Posterior vena cava (tissue), 2 donors: ENCODE measurements at regions of chr19 and their contacts with region 1.

Region 1: GRCh38 chr19:43777163-43777700 is 3.5 kb downstream of the KCNN4 start:
- DNase-seq: no peak

Region 2: DNA sequence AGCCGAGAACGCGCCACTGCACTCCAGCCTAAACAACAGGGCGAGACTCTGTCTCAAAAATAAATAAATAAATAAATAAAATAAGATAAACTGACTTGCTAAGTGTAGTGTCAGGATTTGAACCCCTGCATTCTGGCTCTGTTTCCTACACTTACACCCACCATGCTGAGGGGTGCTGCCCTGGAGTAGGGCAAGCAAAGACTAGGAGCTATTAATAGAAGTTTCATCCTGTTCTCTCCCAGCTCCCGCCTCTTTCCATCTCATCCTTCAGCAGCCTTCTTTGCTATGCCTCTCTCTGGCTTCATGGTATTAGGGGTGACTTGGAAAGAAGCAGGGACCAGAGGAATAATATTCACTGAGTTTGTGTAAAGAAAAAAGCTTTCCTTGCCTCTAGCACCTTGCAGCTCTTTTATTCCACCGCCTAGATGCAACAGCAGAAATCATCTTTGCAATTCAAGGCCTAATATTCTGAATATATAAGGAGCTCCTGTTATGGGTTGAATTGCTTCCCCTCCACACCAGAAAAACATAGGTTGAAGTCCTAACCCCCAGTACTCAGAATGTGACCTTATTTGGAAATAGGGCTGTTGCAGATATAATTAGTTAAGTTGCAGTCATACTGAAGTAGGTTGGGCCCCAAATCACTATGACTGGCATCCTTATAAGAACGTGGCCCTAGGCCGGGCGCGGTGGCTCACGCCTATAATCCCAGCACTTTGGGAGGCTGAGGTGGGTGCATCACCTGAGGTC is 98.5 kb before region 1 on chr19:
- intact Hi-C with region 1: no loop called
- DNase-seq: no peak

Region 3: DNA sequence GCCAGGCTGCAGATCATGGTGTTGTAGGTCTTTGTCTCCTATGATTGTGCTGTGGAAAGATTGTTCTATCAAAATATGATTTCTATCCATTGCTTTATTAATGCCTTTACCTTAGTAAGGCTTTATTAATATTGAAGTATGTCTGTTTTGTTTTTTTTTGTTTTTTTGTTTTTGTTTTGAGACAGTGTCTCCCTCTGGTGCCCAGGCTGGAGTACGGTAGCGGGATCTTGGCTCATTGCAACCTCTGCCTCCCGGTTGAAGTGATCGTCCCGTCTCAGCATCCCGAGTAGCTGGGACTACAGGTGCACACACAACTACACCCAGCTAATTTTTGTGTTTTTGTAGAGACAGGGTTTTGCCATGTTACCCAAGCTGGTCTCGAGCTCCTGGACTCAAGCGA is 53.6 kb before region 1 on chr19:
- intact Hi-C with region 1: loop called in 1 of 2 experiments (anchors 1 kb)
- DNase-seq: no peak

Region 4: DNA sequence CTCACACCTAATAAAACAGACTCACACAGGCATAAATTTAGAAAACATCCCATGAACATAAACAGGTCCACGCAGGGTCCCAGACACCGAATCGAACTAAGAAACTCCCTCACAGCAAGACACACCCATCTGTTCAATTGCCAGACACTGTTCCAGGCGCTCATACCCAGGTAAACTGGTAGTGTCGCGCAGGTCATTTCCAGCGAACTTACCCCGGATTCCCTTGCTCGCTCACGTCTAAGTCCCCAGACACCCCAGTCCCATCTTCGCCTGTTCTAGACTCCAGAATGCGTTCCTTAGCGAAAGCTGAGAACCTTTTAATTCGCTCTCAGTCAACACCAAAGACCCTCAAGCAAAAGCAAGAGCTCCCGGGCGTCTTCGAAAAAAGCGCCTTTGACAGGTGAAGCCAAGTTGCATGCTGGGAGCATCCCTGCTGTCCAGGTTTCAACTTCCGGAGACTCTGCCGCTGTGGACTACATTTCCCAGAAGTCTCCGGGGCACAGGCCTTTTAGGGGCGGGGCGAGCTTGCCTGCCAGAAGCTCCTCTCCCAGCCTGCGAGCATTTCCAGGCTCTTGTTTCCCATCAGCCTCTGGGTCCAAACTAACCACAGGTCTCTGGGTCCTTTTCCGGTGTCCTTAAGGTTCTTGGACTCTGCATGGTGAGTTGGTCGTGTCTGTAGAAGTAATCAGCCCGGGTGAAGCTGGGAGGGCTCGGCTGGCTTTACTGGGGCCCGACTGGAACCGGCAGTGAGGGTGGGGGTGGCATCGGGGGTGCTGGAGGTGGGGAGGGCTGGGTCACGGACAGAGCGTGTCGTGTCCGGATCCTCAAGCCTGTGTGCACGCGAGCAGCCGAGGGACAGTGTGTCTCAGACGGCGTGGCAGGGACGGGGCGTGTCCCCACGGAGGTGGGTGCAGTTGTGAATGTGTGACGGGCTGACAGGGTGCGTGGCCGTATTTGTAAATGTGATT is 49.8 kb after region 1 on chr19 and contains the start of gene ZNF283:
- intact Hi-C with region 1: no loop called
- DNase-seq: peak; percentile 94
- total RNA-seq, gene ZNF283: 9.7 to 9.8 TPM

Region 5: DNA sequence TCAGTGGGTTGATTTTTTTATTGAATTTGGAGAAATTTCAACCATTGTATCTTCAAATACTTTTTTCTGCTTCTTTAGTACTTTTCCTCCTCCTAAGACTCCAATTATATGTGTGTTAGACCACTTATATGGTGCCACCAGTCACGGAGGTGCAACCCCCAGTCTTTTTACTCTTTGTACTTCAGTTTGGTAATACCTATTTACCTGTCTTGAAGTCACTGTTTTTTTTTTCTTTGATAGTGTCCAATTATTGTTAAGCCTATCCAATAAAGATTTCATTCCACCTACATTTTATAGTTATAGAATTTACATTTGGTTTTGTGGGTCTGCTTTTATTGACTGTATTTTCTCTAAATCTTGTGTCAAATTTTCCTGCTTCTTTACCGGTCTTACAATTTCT is 64.8 kb after region 1 on chr19:
- intact Hi-C with region 1: no loop called
- DNase-seq: no peak